Caco-2 (cell line): ENCODE measurements at regions of chr3 and their contacts with region 1.

Region 1: GRCh38 chr3:71583566-71584449 is at the start of gene FOXP1:
- DNase-seq: peak; percentile 60 to 64
- H3K4me3 ChIP-seq: peak within 1 kb of the TSS; percentile 77
- H3K4me3 Mint-ChIP-seq: peak within 1 kb of the TSS; percentile 91
- H3K27ac Mint-ChIP-seq: peak within 1 kb of the TSS; percentile 90
- H3K4me1 ChIP-seq: peaks cover 12% of the 10 kb centered on the region
- H3K4me1 Mint-ChIP-seq: peaks cover 18% of the 10 kb centered on the region
- H3K27me3 ChIP-seq: no peaks in the 10 kb centered on the region
- H3K27me3 Mint-ChIP-seq: no peaks in the 10 kb centered on the region
- CTCF ChIP-seq: no peak
- total RNA-seq, gene FOXP1: 131 and 155 TPM in 2 replicates

Region 2: DNA sequence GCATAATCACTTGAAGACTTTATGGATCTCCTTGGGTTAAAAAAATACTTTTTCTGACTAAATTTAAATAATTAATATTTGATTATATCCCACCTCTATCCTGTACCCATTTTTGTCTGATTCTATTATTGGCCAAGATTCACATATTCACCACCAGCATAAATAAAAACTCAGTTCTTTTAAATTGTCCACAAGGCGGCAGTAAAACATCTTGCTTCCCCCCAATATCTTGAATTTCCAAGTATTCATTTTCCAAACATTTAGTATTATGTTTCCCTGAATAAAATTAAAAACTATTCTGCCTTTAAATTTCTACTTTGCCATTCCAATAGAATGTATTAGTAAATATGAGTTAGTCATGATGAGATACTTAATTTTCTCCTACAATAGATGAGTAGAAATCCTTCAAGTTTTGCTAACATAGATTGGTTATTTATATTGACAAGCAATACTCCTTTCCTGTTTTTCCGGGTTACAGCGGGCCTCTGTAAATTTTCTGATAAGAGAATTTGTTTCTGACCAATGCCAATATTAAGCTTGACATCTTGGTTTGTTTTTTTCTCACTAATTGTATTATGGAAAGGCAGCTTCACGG is 1052.6 kb before region 1 on chr3:
- CTCF ChIA-PET with region 1: no interaction called
- POLR2A ChIA-PET with region 1: no interaction called
- intact Hi-C with region 1: loop called (anchors 10 kb)
- DNase-seq: peak in 1 of 2 experiments; percentile 4
- H3K4me3 ChIP-seq: no peak overlapping the region
- H3K4me3 Mint-ChIP-seq: no peak overlapping the region
- H3K27ac Mint-ChIP-seq: no peak overlapping the region
- H3K4me1 ChIP-seq: no peaks in the 10 kb centered on the region
- H3K4me1 Mint-ChIP-seq: no peaks in the 10 kb centered on the region
- H3K27me3 ChIP-seq: no peaks in the 10 kb centered on the region
- H3K27me3 Mint-ChIP-seq: peaks cover 17% of the 10 kb centered on the region
- CTCF ChIP-seq: peak; percentile 38 to 46

Region 3: GRCh38 chr3:71121429-71122167 is 462.2 kb before region 1 on chr3:
- CTCF ChIA-PET with region 1: no interaction called
- POLR2A ChIA-PET with region 1: no interaction called
- intact Hi-C with region 1: loop called (anchors 2 kb)
- DNase-seq: no peak
- H3K4me3 ChIP-seq: no peak overlapping the region
- H3K4me3 Mint-ChIP-seq: no peak overlapping the region
- H3K27ac Mint-ChIP-seq: peak overlapping the region; percentile 71
- H3K4me1 ChIP-seq: peaks cover 57% of the 10 kb centered on the region
- H3K4me1 Mint-ChIP-seq: peaks cover 52% of the 10 kb centered on the region
- H3K27me3 ChIP-seq: no peaks in the 10 kb centered on the region
- H3K27me3 Mint-ChIP-seq: no peaks in the 10 kb centered on the region
- CTCF ChIP-seq: no peak

Region 4: DNA sequence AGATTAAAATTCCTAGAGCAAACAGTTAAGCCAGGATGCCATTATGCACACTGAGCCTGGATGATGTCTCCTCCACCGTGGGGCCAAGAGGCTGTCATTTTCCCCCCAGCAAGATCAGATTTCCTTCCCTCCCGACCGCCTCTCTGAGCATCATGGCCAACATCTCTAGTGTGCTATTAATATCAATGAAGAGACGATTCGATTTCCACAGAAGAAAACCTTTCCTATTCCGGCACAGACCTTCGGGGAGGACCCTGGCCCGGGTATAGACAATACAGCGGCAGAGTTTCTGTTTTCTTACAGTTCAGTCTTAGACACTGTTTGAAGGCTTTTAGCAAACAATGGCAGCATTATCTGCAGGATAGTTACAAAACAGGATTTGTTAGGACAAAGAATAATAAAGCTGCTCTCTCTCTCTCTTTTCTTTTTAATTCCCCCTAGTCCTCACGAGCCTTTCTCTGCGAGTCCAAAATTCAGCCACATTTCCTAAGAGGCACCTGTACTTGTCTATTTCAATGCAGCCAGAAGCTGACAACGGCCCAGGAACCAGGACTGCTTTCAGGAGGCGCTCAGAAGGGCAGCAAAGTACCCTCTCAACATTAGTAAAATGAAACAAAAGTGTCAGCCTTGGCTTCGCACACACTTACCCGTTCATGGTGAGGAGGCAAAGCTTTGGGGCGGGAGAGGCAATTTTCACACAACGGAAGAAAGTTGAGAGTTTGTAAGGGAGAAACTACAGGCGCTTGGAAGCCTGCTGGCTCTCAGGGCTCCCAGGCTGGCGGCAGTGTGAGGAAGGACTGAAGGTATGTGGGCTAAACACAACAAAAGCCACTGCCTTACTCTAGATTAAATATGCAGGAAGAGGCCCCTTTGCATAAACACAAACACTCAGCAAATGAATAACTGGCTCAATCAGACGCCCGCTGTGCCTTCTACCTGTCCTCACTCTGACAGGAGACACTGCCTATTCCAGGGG is 278.3 kb before region 1 on chr3:
- CTCF ChIA-PET with region 1: no interaction called
- POLR2A ChIA-PET with region 1: no interaction called
- intact Hi-C with region 1: loop called (anchors 1 kb)
- DNase-seq: peak; percentile 36 to 41
- H3K4me3 ChIP-seq: peak overlapping the region; percentile 47
- H3K4me3 Mint-ChIP-seq: peak overlapping the region; percentile 93
- H3K27ac Mint-ChIP-seq: peak overlapping the region; percentile 91
- H3K4me1 ChIP-seq: peaks cover 26% of the 10 kb centered on the region
- H3K4me1 Mint-ChIP-seq: peaks cover 36% of the 10 kb centered on the region
- H3K27me3 ChIP-seq: no peaks in the 10 kb centered on the region
- H3K27me3 Mint-ChIP-seq: no peaks in the 10 kb centered on the region
- CTCF ChIP-seq: no peak

Region 5: GRCh38 chr3:71453822-71454511 is 129.8 kb before region 1 on chr3:
- CTCF ChIA-PET with region 1: no interaction called
- POLR2A ChIA-PET with region 1: no interaction called
- intact Hi-C with region 1: loop called (anchors 2 kb)
- DNase-seq: peak; percentile 50 to 65
- H3K4me3 ChIP-seq: no peak overlapping the region
- H3K4me3 Mint-ChIP-seq: peak overlapping the region; percentile 64
- H3K27ac Mint-ChIP-seq: peak overlapping the region; percentile 86
- H3K4me1 ChIP-seq: peaks cover 64% of the 10 kb centered on the region
- H3K4me1 Mint-ChIP-seq: peaks cover 53% of the 10 kb centered on the region
- H3K27me3 ChIP-seq: no peaks in the 10 kb centered on the region
- H3K27me3 Mint-ChIP-seq: no peaks in the 10 kb centered on the region
- CTCF ChIP-seq: no peak

Region 6: DNA sequence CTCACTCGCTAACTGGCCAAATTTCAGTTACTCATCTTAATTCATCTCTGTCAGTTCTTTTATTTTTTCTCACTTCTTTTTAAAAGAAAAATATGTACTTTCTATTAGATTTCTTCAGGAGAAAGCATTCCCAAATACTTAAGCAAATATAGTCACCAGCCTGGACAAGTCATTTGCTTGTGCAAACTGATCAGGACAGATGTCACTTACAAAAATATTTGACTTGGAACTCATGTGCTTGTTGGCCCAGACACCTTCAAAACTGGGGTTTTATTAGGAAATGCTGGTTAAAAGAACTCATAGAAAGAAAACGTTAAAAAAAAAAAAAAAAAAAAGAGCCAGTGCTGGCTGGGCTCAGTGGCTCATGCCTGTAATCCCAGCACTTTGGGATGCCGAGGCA is 31.1 kb after region 1 on chr3:
- CTCF ChIA-PET with region 1: no interaction called
- POLR2A ChIA-PET with region 1: no interaction called
- intact Hi-C with region 1: no loop called
- DNase-seq: no peak
- H3K4me3 ChIP-seq: no peak overlapping the region
- H3K4me3 Mint-ChIP-seq: no peak overlapping the region
- H3K27ac Mint-ChIP-seq: no peak overlapping the region
- H3K4me1 ChIP-seq: no peaks in the 10 kb centered on the region
- H3K4me1 Mint-ChIP-seq: no peaks in the 10 kb centered on the region
- H3K27me3 ChIP-seq: no peaks in the 10 kb centered on the region
- H3K27me3 Mint-ChIP-seq: no peaks in the 10 kb centered on the region
- CTCF ChIP-seq: no peak

Region 7: GRCh38 chr3:71652781-71653413 is 69.1 kb after region 1 on chr3:
- CTCF ChIA-PET with region 1: no interaction called
- POLR2A ChIA-PET with region 1: interaction called, 3 read pairs
- intact Hi-C with region 1: loop called (anchors 5 kb)
- DNase-seq: peak; percentile 49 to 55
- H3K4me3 ChIP-seq: no peak overlapping the region
- H3K4me3 Mint-ChIP-seq: no peak overlapping the region
- H3K27ac Mint-ChIP-seq: peak overlapping the region; percentile 39
- H3K4me1 ChIP-seq: peaks cover 11% of the 10 kb centered on the region
- H3K4me1 Mint-ChIP-seq: peaks cover 16% of the 10 kb centered on the region
- H3K27me3 ChIP-seq: no peaks in the 10 kb centered on the region
- H3K27me3 Mint-ChIP-seq: peaks cover 2% of the 10 kb centered on the region
- CTCF ChIP-seq: peak; percentile 52 to 54

Region 8: DNA sequence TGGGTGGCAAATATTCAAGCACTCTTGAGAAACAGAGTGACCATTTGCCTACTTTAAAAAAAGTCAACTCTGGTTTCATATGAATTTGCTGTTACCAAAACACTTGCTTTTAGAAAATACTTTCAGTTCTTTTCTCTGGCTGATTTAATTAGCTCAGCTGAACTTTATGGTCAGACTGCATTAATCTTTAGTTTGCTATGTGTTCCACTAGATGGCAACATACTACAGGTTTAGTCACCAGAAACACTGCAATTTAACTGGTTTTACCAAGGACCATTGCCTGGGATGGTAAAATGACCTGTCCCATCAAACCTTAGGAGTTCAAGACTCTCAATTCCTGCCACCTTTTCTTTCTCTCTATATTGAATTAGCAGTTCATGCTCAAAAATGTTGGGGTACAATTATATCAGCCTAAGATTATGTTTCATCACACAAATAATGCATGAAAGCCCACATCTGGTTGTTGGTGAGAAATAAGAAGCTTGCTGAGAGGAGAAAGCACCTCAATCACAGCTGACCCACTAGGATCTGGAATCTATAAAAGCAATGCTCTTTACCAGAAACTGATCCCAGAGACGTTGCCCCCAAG is 127.2 kb after region 1 on chr3:
- CTCF ChIA-PET with region 1: no interaction called
- POLR2A ChIA-PET with region 1: no interaction called
- intact Hi-C with region 1: no loop called
- DNase-seq: peak in 1 of 2 experiments; percentile 29
- H3K4me3 ChIP-seq: no peak overlapping the region
- H3K4me3 Mint-ChIP-seq: no peak overlapping the region
- H3K27ac Mint-ChIP-seq: no peak overlapping the region
- H3K4me1 ChIP-seq: peaks cover 9% of the 10 kb centered on the region
- H3K4me1 Mint-ChIP-seq: no peaks in the 10 kb centered on the region
- H3K27me3 ChIP-seq: no peaks in the 10 kb centered on the region
- H3K27me3 Mint-ChIP-seq: no peaks in the 10 kb centered on the region
- CTCF ChIP-seq: peak; percentile 38 to 57